ENCODE measurements at regions of chr19 and their contacts with region 1.

Region 1: DNA sequence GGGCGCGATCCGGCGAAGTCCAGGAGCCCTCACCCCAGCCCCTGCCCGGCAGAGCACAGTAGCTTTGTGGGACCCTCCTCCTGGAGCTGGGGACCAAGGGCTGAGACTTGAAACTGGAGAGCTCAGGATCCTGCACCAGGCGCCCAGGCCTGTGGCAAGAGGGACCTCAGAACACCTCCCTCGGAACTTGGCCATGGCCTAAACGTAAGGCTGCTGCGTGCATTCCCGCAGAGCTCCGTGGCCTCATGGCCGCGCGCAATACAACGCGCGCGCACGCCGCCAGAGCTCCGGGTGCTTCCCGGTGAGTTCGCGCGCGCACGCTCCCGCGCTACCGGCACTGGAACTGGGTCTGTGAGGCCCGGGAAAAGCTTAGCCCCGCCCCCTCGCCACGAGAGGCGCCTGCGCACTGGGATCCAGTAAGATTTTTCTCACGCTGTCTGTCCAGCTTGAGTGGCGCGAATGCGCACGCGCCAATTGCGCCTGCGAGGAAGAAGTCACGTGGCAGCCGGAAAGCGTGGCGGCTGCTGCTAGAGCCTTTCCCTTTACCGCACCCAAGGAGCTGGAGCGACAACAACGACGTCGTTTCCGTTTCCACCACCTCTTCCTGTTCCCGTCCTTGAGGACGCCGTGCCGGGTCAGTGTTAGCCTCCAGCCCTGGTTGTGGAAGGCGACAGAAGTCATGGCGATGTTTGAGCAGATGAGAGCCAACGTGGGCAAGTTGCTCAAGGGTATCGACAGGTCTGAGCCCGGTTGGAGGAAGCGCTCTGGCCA is at the start of gene EIF3K:
- DNase-seq: peak; percentile 99 to 100
- H3K4me3 ChIP-seq: peak within 1 kb of the TSS; percentile 81
- H3K4me3 Mint-ChIP-seq: peak within 1 kb of the TSS; percentile 99
- H3K27ac Mint-ChIP-seq: peak within 1 kb of the TSS; percentile 99
- H3K4me1 ChIP-seq: no peaks in the 10 kb centered on the region
- H3K4me1 Mint-ChIP-seq: peaks cover 7% of the 10 kb centered on the region
- H3K27me3 ChIP-seq: no peaks in the 10 kb centered on the region
- H3K27me3 Mint-ChIP-seq: no peaks in the 10 kb centered on the region
- CTCF ChIP-seq: no peak
- total RNA-seq, gene EIF3K: 354 and 380 TPM in 2 replicates

Region 2: DNA sequence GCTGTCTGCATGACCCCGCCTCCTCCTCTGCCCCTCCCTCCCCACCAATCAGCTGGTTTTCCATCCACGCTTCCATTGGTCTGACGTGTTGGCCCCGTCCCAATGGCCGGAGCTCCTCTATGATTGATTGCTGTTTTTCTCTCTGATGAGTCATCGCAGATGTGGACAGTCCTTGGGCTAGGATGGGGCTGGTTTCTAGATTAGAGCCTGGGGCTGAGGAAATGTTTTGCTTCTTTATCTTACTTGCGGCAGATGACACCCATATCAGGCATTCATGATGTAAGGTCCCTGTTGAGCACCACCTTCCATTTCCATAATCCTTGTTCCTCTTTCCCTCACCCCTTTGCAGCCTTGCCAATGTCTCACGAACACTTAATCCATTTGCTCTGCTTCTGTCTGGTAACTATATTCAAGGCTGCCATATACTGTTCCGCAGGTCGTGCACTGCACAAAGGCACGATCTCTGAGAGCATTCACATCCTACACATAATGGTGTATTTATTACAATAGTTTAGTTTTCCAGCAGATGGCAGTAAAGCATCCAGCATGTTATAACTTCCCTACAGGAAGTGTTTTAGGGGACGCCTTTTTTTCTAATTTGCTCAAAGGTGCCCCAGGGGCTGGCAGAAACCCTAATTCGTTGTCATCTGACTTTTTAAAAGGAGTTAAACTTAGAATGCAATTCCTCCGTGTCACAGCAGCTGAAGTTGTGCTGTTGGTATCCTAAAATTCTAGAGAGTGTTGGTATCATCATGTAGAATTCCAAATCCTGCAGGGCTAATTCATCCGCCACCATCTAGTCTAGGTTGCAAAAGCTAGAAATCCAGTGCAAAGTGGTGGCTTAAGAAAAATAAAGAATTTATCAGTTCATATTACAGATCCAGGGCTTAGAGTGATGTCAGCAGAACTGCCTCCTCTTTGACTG is 74.5 kb before region 1 on chr19:
- CTCF ChIA-PET with region 1: no interaction called
- POLR2A ChIA-PET with region 1: no interaction called
- intact Hi-C with region 1: loop called (anchors 5 kb)
- DNase-seq: peak; percentile 69 to 82
- H3K4me3 ChIP-seq: peak overlapping the region; percentile 24; the same call in 1 of the 2 replicates
- H3K4me3 Mint-ChIP-seq: peak overlapping the region; percentile 44
- H3K27ac Mint-ChIP-seq: no peak overlapping the region
- H3K4me1 ChIP-seq: 0 out of 2 replicates have a peak, but pooled peaks cover 9% of the 10 kb centered on the region
- H3K4me1 Mint-ChIP-seq: peaks cover 6% of the 10 kb centered on the region
- H3K27me3 ChIP-seq: no peaks in the 10 kb centered on the region
- H3K27me3 Mint-ChIP-seq: no peaks in the 10 kb centered on the region
- CTCF ChIP-seq: peak; percentile 47 to 71

Region 3: GRCh38 chr19:38583219-38583984 is 35.4 kb before region 1 on chr19:
- CTCF ChIA-PET with region 1: interaction called, 3 read pairs
- POLR2A ChIA-PET with region 1: interaction called, 13 read pairs
- intact Hi-C with region 1: no loop called
- DNase-seq: no peak
- H3K4me3 ChIP-seq: no peak overlapping the region
- H3K4me3 Mint-ChIP-seq: no peak overlapping the region
- H3K27ac Mint-ChIP-seq: no peak overlapping the region
- H3K4me1 ChIP-seq: no peaks in the 10 kb centered on the region
- H3K4me1 Mint-ChIP-seq: peaks cover 6% of the 10 kb centered on the region
- H3K27me3 ChIP-seq: no peaks in the 10 kb centered on the region
- H3K27me3 Mint-ChIP-seq: no peaks in the 10 kb centered on the region
- CTCF ChIP-seq: no peak

Region 4: DNA sequence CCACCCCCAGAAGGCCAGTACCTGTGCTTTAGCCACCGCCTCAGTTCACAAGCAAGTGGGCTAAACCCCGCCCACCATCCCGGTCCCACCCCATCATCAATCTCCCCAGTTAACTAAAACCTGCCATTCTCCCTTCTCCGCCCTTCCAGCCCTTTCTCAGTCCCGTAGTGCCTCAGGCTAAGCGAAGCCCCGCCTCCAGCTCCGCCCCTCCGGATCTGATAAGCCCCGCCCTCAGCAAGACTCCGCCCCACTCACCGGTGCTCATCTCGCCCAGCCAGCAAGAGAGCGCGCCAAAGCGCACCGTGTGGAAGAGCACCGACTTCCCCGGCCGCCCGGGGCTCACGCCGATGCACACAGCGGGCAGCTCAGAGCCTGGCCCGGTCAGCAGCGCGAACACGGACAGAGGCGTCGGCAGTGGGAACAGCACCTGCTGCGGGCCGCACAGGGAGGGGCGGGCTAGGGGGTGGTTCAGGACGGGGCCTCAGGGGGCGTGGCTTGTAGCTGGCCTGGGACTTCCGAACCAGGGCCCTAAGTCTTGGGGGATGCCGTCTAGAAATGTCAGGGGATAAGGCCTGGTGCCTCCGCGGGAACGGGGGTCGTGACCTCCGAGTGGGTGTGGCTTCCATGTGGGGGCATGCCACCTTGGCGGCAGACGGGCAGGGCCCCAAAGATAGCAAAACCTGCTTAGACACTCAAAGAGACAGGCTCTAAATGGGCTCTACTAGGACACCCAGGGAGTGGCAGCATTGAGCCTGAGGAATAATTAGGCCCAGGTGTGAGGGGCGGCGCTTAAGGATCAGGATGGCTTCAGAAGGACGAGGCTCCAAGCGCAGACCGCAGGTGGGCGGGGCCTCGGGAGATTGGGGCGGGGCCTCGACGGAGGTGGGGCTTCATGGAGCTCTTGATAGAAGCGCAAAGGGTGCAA is 22.5 kb before region 1 on chr19:
- CTCF ChIA-PET with region 1: no interaction called
- POLR2A ChIA-PET with region 1: interaction called, 6 read pairs
- intact Hi-C with region 1: loop called (anchors 2 kb)
- DNase-seq: peak; percentile 87
- H3K4me3 ChIP-seq: peak overlapping the region; percentile 39
- H3K4me3 Mint-ChIP-seq: peak overlapping the region; percentile 85
- H3K27ac Mint-ChIP-seq: peak overlapping the region; percentile 69
- H3K4me1 ChIP-seq: no peaks in the 10 kb centered on the region
- H3K4me1 Mint-ChIP-seq: peaks cover 7% of the 10 kb centered on the region
- H3K27me3 ChIP-seq: no peaks in the 10 kb centered on the region
- H3K27me3 Mint-ChIP-seq: no peaks in the 10 kb centered on the region
- CTCF ChIP-seq: peak in 1 of 2 experiments; percentile 4

Measured in Caco-2 (cell line).